Activated CD8-positive, alpha-beta T cell treated with anti-CD3 and anti-CD28 coated beads, Interleukin-2, amount 10 ng/mL, durations not matched to agents 7 days and 5 days (primary cell): ENCODE measurements at regions of chr14 and their contacts with region 1.

Region 1: GRCh38 chr14:106210652-106211051 is 684.3 kb downstream of the TMEM121 start:
- DNase-seq: peak; percentile 56
- ATAC-seq: peak; percentile 75
- H3K4me3 Mint-ChIP-seq: no peak overlapping the region
- H3K27ac Mint-ChIP-seq: peak overlapping the region; percentile 80
- H3K4me1 Mint-ChIP-seq: peaks cover 14% of the 10 kb centered on the region
- H3K27me3 Mint-ChIP-seq: peaks cover 26% of the 10 kb centered on the region

Region 2: GRCh38 chr14:106115401-106115800 is 95.3 kb before region 1 on chr14:
- CTCF ChIA-PET with region 1: interaction called, 14 read pairs
- POLR2A ChIA-PET with region 1: no interaction called
- DNase-seq: no peak
- ATAC-seq: no peak
- H3K4me3 Mint-ChIP-seq: no peak overlapping the region
- H3K27ac Mint-ChIP-seq: peak overlapping the region; percentile 72
- H3K4me1 Mint-ChIP-seq: peaks cover 27% of the 10 kb centered on the region
- H3K27me3 Mint-ChIP-seq: no peaks in the 10 kb centered on the region

Region 3: DNA sequence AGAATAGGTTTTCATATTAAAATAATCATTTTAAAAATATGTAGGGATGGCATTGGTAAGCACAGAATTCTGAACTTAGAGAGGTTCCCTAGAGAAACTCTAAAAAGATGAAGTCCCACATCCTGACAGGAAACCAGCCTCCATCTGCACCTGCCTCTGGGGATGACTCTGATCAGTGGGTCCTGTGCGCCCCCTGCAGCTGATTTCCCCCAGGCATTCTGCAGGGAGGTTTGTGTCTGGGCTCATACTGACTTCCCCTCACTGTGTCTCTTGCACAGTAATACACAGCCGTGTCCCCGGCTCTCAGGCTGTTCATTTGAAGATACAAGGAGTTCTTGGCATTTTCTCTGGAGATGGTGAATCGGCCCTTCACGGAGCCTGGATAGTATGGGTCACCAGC is 81.4 kb before region 1 on chr14:
- CTCF ChIA-PET with region 1: interaction called, 10 read pairs
- POLR2A ChIA-PET with region 1: no interaction called
- DNase-seq: peak; percentile 73
- ATAC-seq: no peak
- H3K4me3 Mint-ChIP-seq: no peak overlapping the region
- H3K27ac Mint-ChIP-seq: peak overlapping the region; percentile 79
- H3K4me1 Mint-ChIP-seq: peaks cover 26% of the 10 kb centered on the region
- H3K27me3 Mint-ChIP-seq: peaks cover 7% of the 10 kb centered on the region

Region 4: GRCh38 chr14:106222731-106223130 is 12.1 kb after region 1 on chr14:
- CTCF ChIA-PET with region 1: interaction called, 22 read pairs
- POLR2A ChIA-PET with region 1: no interaction called
- DNase-seq: no peak
- ATAC-seq: no peak
- H3K4me3 Mint-ChIP-seq: no peak overlapping the region
- H3K27ac Mint-ChIP-seq: peak overlapping the region; percentile 81
- H3K4me1 Mint-ChIP-seq: peaks cover 33% of the 10 kb centered on the region
- H3K27me3 Mint-ChIP-seq: peaks cover 3% of the 10 kb centered on the region

Region 5: DNA sequence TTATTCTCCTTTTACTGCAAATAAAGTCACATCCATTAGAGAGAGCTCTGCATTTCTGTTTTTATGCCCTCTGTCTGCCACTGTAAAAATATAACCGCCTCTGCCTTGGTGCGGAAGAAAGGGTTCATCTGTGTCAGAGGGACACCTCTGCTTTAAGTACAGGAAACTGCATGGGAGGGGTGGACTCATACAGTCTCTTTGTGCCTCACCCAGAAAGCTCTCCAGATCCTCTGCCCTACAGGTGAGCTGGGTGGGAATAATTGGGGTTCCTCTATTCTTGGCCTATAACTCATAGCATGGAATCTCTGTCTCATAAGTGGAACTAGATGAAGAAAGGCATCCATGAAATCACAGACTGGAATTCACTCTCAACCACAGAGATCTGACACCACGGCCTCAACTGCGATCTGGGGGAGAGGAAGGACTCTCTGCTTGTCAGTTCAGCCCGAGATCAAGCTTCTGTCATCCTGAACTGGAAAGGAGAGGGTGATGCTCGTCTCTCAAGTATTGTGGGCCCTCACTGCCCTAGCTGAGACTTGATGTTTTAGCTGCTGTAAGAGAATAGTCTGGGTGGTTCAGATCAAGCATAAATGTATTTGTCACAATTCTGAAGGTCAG is 18.0 kb after region 1 on chr14:
- CTCF ChIA-PET with region 1: interaction called, 22 read pairs
- POLR2A ChIA-PET with region 1: no interaction called
- DNase-seq: peak; percentile 56
- ATAC-seq: peak; percentile 96
- H3K4me3 Mint-ChIP-seq: peak overlapping the region; percentile 67
- H3K27ac Mint-ChIP-seq: peak overlapping the region; percentile 87
- H3K4me1 Mint-ChIP-seq: peaks cover 37% of the 10 kb centered on the region
- H3K27me3 Mint-ChIP-seq: no peaks in the 10 kb centered on the region

Region 6: DNA sequence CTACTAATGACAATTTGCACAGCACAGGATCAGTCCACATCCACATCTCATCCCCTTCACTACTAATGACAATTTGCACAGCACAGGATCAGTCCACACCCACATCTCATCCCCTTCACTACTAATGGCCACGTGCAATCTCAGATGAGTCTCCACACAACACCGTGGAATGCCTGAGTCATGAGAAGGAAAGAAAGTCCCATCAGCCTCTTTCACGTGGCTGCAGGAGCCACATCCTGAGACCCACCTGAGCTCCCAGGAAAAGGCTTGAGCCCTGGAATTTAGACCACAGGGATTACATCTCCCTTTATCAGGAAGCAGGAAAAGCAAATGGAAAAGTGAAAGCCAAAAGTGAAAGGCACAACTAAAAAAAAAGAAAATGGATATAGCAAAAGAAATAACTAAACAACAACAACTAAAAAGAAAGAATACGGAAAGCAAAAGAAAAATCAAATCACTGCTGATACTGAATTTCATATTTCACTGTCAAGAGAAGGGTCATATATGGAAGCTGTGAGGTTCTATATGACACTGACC is 616.2 kb after region 1 on chr14:
- CTCF ChIA-PET with region 1: no interaction called
- POLR2A ChIA-PET with region 1: no interaction called
- DNase-seq: no peak
- ATAC-seq: no peak
- H3K4me3 Mint-ChIP-seq: no peak overlapping the region
- H3K27ac Mint-ChIP-seq: no peak overlapping the region
- H3K4me1 Mint-ChIP-seq: no peaks in the 10 kb centered on the region
- H3K27me3 Mint-ChIP-seq: peaks cover 35% of the 10 kb centered on the region